ENCODE measurements at regions of chr4 and their contacts with region 1.

Region 1: GRCh38 chr4:80125252-80126177 is 52.5 kb upstream of the ANTXR2 start:
- DNase-seq: peak; percentile 54
- H3K4me3 Mint-ChIP-seq: peak overlapping the region; percentile 6
- H3K27ac Mint-ChIP-seq: peak overlapping the region; percentile 89
- H3K4me1 Mint-ChIP-seq: peaks cover 58% of the 10 kb centered on the region
- H3K27me3 Mint-ChIP-seq: no peaks in the 10 kb centered on the region

Region 2: DNA sequence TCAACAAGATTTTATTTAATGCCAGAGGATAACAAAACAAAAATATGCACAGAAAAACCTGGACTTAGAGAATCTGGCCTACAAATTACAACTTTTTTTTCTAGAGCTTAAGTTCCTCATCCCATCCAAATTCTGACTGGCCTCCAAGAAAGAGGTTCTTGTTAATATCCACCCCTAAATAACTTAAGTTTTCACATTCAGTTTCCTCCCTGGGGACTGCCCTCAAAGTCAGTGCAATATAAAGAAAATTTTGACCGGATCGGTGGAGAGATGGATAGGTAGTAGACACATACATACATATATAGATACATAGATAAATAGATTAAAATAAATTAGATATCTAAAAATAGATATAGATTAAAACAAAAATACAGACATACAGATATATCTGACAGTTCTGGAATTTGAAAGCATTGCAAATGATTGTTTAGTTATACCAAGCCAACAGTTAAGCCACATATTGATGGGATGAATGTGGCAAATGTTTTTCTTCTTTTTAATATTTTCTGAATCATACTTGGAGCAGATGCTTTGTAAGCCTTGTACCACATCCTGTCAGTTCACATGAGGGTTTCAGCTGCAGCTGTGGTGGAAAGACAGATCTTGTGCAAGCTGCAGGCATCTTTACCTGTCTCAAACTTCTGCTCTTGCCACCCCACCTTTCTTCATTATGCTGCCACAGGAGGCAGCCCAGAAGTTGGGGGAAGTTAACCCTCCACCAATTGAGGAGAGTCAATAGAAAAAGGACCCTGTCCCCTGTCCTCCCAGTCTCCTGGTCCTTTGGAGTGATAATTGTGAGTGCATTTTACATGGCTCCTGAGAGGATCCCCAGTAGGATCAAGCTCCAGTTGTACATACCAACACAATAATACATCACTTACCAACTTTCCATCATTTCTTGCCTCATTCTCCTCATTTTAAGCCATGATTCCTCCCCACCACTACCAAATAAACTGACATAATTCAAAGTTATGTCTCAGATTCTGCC is 13.3 kb after region 1 on chr4:
- CTCF ChIA-PET with region 1: interaction called, 51 read pairs
- DNase-seq: peak; percentile 73
- H3K4me3 Mint-ChIP-seq: no peak overlapping the region
- H3K27ac Mint-ChIP-seq: peak overlapping the region; percentile 88
- H3K4me1 Mint-ChIP-seq: peaks cover 54% of the 10 kb centered on the region
- H3K27me3 Mint-ChIP-seq: no peaks in the 10 kb centered on the region